GM10248 (cell line): ENCODE measurements at regions of chr3 and their contacts with region 1.

Region 1: DNA sequence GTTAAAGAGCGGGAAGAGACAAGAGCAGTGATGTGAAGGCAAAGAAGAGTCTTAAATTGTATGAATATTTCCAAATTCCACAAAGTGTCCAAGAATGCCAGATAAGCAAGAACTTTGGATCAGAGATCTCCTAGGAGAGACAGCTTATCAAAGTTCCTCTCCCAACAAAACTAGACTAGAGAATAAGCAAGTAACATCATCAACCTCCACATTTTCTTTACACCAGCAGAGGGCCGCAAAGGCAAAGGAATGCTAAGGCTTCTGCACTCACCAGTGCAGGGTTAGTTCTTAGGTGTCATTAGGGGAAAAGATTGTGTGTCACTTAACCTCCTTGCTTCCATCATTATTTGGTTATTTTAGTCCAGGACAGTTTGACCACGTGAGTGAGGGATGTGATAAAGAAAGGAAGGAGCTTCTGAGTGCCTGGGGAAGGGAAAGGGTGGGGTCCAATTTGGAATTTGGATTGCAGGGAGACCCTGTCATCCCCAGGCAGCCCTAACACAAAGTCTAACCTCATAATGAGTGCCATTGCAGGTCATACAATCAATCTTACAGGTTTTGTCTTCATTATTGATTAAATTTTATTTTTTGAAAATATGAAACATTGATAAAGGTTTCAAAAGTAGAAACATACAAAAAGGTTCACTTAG is 7.5 kb upstream of the CMTM6 start:
- DNase-seq: peak; percentile 77
- CTCF ChIP-seq: peak; percentile 71

Region 2: DNA sequence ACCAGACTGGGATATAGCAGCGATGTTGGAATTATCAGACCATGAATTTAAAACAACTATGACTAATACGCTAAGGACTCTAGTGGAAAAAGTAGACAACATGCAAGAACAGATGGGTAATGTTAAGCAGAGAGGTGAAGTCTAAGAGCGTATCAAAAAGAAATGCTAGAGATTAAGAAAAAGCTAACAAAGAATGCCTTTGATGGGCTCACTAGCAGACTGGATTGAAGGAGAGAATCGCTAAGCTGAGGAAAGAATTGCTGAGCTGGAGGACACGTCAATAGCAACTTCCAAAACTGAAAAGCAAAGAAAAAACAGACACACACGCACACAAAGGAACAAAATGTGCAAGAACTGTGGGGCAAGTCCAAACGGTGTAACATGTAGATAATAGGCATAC is 12.5 kb after region 1 on chr3:
- CTCF ChIA-PET with region 1: interaction called, 10 read pairs
- POLR2A ChIA-PET with region 1: no interaction called
- DNase-seq: no peak
- CTCF ChIP-seq: no peak

Region 3: DNA sequence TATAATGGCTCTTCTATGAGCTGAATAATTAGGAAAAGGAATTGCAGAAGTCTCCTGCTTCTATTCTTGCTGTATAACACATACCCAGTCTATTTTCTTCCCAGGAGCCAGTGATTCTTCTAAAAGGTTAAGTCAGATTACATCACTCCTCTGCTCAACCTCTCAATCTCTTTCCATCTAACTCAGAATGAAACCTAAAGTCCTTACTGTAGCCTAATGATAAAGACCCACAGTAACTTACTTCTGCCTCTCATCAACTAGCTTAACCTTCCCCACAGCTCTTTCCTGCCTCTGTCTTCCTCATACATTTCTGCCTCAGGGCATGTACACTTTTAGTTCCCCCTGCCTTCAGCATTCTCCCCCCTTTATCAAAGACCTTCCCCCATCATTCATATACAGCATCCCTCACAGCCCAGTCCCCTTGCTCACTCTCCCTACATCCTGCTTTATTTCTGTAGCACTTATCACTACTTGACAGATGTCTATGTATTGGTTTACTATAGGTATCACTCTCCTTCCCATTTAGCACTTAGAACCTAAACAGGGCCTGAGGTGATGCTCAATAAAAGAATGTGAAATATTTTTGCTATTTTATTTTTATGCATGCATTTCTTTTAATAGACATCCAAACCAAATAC is 20.9 kb after region 1 on chr3:
- CTCF ChIA-PET with region 1: interaction called, 20 read pairs
- POLR2A ChIA-PET with region 1: no interaction called
- DNase-seq: peak; percentile 28
- CTCF ChIP-seq: no peak